ENCODE measurements at regions of chrX and their contacts with region 1.

Region 1: GRCh38 chrX:1170243-1170642 is 42.2 kb downstream of the CRLF2 start:
- DNase-seq: no peak
- ATAC-seq: no peak
- H3K4me3 ChIP-seq: no peak overlapping the region
- H3K27ac ChIP-seq: no peak overlapping the region
- H3K4me1 ChIP-seq: no peaks in the 10 kb centered on the region
- H3K27me3 ChIP-seq: no peaks in the 10 kb centered on the region
- CTCF ChIP-seq: no peak
- EP300 ChIP-seq: no peak
- POLR2A ChIP-seq: no peak
- RAD21 ChIP-seq: no peak

Region 2: DNA sequence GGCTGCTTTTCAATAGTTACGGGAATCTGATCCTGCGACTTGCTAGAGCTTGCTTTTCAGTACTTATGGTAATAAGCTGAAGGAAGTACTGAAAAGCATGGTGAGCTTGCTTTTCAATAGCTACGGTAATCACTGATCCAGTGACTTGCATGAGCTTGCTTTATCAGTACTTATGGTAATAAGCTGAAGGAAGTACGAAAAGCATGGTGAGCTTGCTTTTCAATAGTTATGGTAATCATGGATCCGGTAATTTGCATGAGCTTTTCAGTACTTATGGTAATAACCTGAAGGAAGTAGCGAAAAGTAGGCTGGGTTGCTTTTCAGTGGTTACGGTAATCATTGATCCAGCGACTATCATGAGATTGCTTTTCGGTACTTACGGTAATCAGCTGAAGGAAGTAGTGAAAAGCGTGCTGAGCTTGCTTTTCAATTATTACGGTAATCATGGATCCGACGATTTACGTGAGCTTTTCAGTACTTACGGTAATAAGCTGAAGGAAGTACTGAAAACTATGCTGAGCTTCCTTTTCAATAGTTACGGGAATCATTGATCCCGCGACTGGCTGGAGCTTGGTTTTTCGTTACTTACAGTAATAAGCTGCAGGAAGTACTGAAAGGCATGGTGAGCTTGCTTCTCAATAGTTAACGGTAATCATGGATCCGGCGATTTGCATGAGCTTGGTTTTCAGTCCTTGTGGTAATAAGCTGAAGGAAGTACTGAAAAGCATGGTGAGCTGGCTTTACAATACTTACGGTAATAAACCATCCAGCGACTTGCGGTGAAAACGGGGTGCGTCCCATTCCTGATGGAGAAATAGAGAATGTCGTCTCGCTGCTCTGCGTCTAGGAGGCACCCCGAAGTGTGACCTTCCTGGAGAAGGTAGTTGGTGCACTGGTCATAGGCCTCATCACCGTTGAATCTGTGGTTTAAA is 35.7 kb after region 1 on chrX:
- CTCF ChIA-PET with region 1: no interaction called
- POLR2A ChIA-PET with region 1: no interaction called
- RAD21 ChIA-PET with region 1: no interaction called
- SMC1A ChIA-PET with region 1: no interaction called
- in situ Hi-C with region 1: no loop called
- intact Hi-C with region 1: loop called (anchors 5 kb)
- DNase-seq: no peak
- ATAC-seq: peak; percentile 39
- H3K4me3 ChIP-seq: peak overlapping the region; percentile 24; the same call in 1 of the 2 replicates
- H3K27ac ChIP-seq: no peak overlapping the region; the same call in 1 of the 2 replicates
- H3K4me1 ChIP-seq: peaks cover 7% of the 10 kb centered on the region; the same call in 1 of the 2 replicates
- H3K27me3 ChIP-seq: no peaks in the 10 kb centered on the region
- CTCF ChIP-seq: no peak
- EP300 ChIP-seq: 0 out of 4 replicates have a peak, but pooled peaks of 1 of the 2 experiments have one; percentile 15
- POLR2A ChIP-seq: no peak
- RAD21 ChIP-seq: no peak